CD8-positive, alpha-beta memory T cell (primary cell): ENCODE measurements at regions of chr17 and their contacts with region 1.

Region 1: GRCh38 chr17:54992797-54993639 is 24.5 kb downstream of the STXBP4 start:
- DNase-seq: peak in 2 of 5 donors; percentile 37 to 39
- H3K4me3 ChIP-seq: no peak overlapping the region
- H3K4me3 Mint-ChIP-seq: no peak overlapping the region
- H3K27ac ChIP-seq: no peak overlapping the region
- H3K27ac Mint-ChIP-seq: no peak overlapping the region
- H3K4me1 ChIP-seq: no peaks in the 10 kb centered on the region
- H3K4me1 Mint-ChIP-seq: no peaks in the 10 kb centered on the region
- H3K27me3 ChIP-seq: no peaks in the 10 kb centered on the region
- H3K27me3 Mint-ChIP-seq: no peaks in the 10 kb centered on the region

Region 2: GRCh38 chr17:55295411-55296170 is 302.6 kb after region 1 on chr17:
- CTCF ChIA-PET with region 1: interaction called, 21 read pairs
- POLR2A ChIA-PET with region 1: no interaction called
- DNase-seq: peak; percentile 14 to 64 (median 40)
- H3K4me3 ChIP-seq: no peak overlapping the region
- H3K4me3 Mint-ChIP-seq: no peak overlapping the region
- H3K27ac ChIP-seq: no peak overlapping the region
- H3K27ac Mint-ChIP-seq: no peak overlapping the region
- H3K4me1 ChIP-seq: no peaks in the 10 kb centered on the region
- H3K4me1 Mint-ChIP-seq: no peaks in the 10 kb centered on the region
- H3K27me3 ChIP-seq: no peaks in the 10 kb centered on the region
- H3K27me3 Mint-ChIP-seq: peaks cover 0 to 5% of the 10 kb centered on the region in 2 donors

Region 3: GRCh38 chr17:55348749-55349354 is 355.8 kb after region 1 on chr17:
- CTCF ChIA-PET with region 1: interaction called, 34 read pairs
- POLR2A ChIA-PET with region 1: no interaction called
- DNase-seq: peak; percentile 3 to 50 (median 17)
- H3K4me3 ChIP-seq: no peak overlapping the region
- H3K4me3 Mint-ChIP-seq: peak overlapping the region in 4 of 7 donors; percentile 6 to 63 (median 40)
- H3K27ac ChIP-seq: no peak overlapping the region
- H3K27ac Mint-ChIP-seq: peak overlapping the region in 1 of 8 donors; percentile 69
- H3K4me1 ChIP-seq: peaks cover 10% of the 10 kb centered on the region
- H3K4me1 Mint-ChIP-seq: peaks cover 12 to 30% (median 29%) of the 10 kb centered on the region in 3 donors
- H3K27me3 ChIP-seq: no peaks in the 10 kb centered on the region
- H3K27me3 Mint-ChIP-seq: no peaks in the 10 kb centered on the region

Region 4: GRCh38 chr17:55356434-55357328 is 363.7 kb after region 1 on chr17:
- CTCF ChIA-PET with region 1: interaction called, 13 read pairs
- POLR2A ChIA-PET with region 1: no interaction called
- DNase-seq: peak; percentile 20 to 70 (median 41)
- H3K4me3 ChIP-seq: no peak overlapping the region
- H3K4me3 Mint-ChIP-seq: no peak overlapping the region
- H3K27ac ChIP-seq: no peak overlapping the region
- H3K27ac Mint-ChIP-seq: no peak overlapping the region
- H3K4me1 ChIP-seq: no peaks in the 10 kb centered on the region
- H3K4me1 Mint-ChIP-seq: peaks cover 0 to 5% (median 3%) of the 10 kb centered on the region in 3 donors
- H3K27me3 ChIP-seq: no peaks in the 10 kb centered on the region
- H3K27me3 Mint-ChIP-seq: peaks cover 5 to 13% of the 10 kb centered on the region in 2 donors

Region 5: DNA sequence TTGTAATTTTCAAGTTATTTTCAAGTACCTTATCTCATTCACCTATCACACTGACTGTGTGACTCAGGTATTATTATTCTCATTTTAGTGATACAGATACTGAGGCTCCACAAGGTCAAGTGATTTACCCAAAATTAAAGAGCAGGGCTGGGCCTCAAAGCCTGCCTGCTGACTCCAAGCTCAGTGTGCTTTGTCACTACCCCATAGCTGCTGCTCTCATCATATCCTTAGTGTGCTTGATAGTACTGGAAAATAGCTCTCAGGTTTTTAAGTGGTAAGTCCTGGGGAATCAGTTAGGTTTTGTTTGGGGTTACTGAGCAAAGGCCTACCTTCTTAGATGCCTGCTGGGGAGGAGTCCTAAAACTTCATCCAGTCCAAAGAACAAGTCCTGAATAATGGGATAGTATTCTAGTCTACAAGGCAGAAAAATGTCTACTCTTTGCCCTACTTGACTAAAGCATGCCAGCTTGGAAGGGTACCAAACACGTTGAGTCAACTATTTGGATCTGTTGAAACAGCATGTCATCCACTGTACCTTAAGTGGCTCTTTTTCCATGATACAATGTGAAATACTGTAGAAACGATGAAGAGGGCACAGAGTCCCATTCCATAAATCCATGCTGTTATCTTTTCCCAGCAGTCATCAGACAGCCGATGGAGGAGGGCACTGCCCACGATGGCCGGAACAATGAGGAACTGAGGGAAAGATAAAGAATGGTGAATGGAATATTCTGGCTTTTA is 417.9 kb after region 1 on chr17:
- CTCF ChIA-PET with region 1: no interaction called
- POLR2A ChIA-PET with region 1: no interaction called
- DNase-seq: no peak
- H3K4me3 ChIP-seq: no peak overlapping the region
- H3K4me3 Mint-ChIP-seq: no peak overlapping the region
- H3K27ac ChIP-seq: no peak overlapping the region
- H3K27ac Mint-ChIP-seq: no peak overlapping the region
- H3K4me1 ChIP-seq: no peaks in the 10 kb centered on the region
- H3K4me1 Mint-ChIP-seq: peaks cover 14 to 21% (median 16%) of the 10 kb centered on the region in 3 donors
- H3K27me3 ChIP-seq: no peaks in the 10 kb centered on the region
- H3K27me3 Mint-ChIP-seq: no peaks in the 10 kb centered on the region